ENCODE measurements at regions of chr19 and their contacts with region 1.

Region 1: GRCh38 chr19:12766051-12766521 is 9.3 kb downstream of the HOOK2 start:
- DNase-seq: peak; percentile 91
- H3K4me3 Mint-ChIP-seq: peak overlapping the region; percentile 43
- H3K27ac Mint-ChIP-seq: no peak overlapping the region
- H3K4me1 Mint-ChIP-seq: peaks cover 12% of the 10 kb centered on the region
- H3K27me3 Mint-ChIP-seq: no peaks in the 10 kb centered on the region

Region 2: DNA sequence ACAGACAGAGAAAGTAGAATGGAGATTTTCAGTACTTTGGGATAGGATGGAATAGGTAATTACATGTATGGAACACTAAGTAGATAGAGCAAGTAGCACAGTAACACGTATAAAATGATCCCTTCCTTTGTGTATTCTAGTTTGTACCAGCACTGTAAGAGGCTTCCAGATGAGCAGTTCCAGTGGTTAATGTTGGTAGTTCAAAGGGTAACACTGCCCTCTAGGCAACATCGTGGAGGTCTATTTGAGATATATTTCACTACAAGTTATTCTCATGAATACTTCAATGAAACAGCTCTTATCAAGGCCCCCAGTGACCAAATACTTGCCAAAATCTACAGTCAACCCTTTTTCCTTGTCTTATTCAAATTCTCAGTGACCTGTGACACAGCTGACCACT is 419.2 kb before region 1 on chr19:
- CTCF ChIA-PET with region 1: no interaction called
- POLR2A ChIA-PET with region 1: no interaction called
- intact Hi-C with region 1: no loop called
- DNase-seq: peak; percentile 16
- H3K4me3 Mint-ChIP-seq: no peak overlapping the region
- H3K27ac Mint-ChIP-seq: no peak overlapping the region
- H3K4me1 Mint-ChIP-seq: no peaks in the 10 kb centered on the region
- H3K27me3 Mint-ChIP-seq: no peaks in the 10 kb centered on the region

Region 3: GRCh38 chr19:12777217-12778016 is 11.3 kb after region 1 on chr19:
- CTCF ChIA-PET with region 1: interaction called, 110 read pairs
- POLR2A ChIA-PET with region 1: interaction called, 3 read pairs
- intact Hi-C with region 1: no loop called
- DNase-seq: peak; percentile 87
- H3K4me3 Mint-ChIP-seq: peak overlapping the region; percentile 76
- H3K27ac Mint-ChIP-seq: peak overlapping the region; percentile 87
- H3K4me1 Mint-ChIP-seq: peaks cover 40% of the 10 kb centered on the region
- H3K27me3 Mint-ChIP-seq: no peaks in the 10 kb centered on the region